ENCODE measurements at regions of chr17 and their contacts with region 1.

Region 1: DNA sequence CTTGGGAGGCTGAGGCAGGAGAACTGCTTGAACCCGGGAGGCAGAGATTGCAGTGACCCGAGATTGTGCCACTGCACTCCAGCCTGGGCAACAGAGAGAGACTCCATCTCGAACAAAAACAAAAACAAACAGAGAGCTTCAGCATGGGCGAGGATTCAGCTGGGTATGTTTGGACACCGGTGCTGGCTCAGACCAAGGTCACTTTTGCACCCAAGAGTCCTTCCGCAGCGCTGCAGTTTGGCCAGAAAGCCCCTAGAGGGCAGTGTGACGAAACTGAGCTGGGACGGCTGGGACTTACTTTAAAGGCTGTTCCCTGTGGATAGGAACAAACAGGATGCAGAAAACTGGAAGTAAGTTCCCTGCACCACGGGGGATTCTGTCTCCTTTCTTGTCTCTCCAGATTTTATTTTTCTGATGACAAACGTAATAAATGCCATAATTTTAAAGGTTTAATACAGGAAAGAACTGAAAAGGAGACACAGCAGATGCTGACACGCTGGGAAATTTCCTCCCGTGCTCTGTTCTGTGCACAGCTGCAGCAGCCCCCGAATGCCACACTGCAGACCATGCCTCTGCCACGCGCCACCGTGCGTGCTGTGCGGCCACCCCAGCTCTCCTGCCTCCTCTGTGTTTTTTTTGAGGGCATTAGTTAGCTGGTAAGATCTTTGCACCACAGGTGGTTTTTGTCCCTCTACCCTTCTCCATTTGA is 25.2 kb upstream of the USP36 start:
- DNase-seq: peak; percentile 76
- ATAC-seq: peak; percentile 72
- H3K4me3 ChIP-seq: no peak overlapping the region
- H3K4me3 Mint-ChIP-seq: no peak overlapping the region
- H3K27ac ChIP-seq: no peak overlapping the region
- H3K27ac Mint-ChIP-seq: no peak overlapping the region
- H3K4me1 ChIP-seq: no peaks in the 10 kb centered on the region
- H3K4me1 Mint-ChIP-seq: no peaks in the 10 kb centered on the region
- H3K27me3 ChIP-seq: no peaks in the 10 kb centered on the region
- H3K27me3 Mint-ChIP-seq: peaks cover 7% of the 10 kb centered on the region
- CTCF ChIP-seq: peak; percentile 92

Region 2: DNA sequence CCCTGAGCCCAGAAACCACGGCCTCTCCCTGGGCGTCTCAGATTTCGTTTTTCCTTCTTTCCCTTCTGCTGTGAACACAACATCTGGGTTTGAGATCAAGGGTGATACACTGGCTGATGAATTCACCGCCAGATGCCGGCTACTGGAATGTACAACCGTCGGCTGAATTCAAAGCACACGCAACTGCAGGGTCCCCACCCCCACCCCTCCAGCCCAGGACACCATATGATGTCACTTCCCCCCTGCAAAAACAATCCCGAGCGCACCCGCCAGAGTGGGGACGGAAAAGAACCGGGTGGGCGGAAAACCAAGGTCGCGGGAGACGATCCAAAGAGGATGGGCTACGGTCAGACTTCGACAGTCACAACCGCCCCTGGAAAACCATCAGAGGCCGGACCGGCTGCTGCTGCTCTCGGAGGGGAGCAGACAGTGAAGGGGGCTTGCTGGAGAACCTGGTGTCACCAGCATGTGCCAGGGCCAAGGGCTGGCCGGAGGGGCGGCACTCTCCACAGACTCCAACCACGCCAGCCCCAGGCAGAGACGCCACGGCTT is 13.9 kb after region 1 on chr17:
- CTCF ChIA-PET with region 1: interaction called, 14 read pairs
- POLR2A ChIA-PET with region 1: no interaction called
- intact Hi-C with region 1: no loop called
- DNase-seq: peak; percentile 62
- ATAC-seq: peak; percentile 28
- H3K4me3 ChIP-seq: peak overlapping the region in 4 of 5 experiments; percentile 25 to 50 (median 46)
- H3K4me3 Mint-ChIP-seq: peak overlapping the region; percentile 79
- H3K27ac ChIP-seq: peak overlapping the region; percentile 23 to 62
- H3K27ac Mint-ChIP-seq: peak overlapping the region; percentile 67
- H3K4me1 ChIP-seq: peaks cover 28 to 37% of the 10 kb centered on the region in 2 donors
- H3K4me1 Mint-ChIP-seq: peaks cover 34% of the 10 kb centered on the region
- H3K27me3 ChIP-seq: peaks cover 0 to 8% (median 0%) of the 10 kb centered on the region in 4 experiments
- H3K27me3 Mint-ChIP-seq: peaks cover 21% of the 10 kb centered on the region
- CTCF ChIP-seq: no peak

Region 3: GRCh38 chr17:78890498-78890897 is 24.7 kb after region 1 on chr17:
- CTCF ChIA-PET with region 1: interaction called, 42 read pairs
- POLR2A ChIA-PET with region 1: interaction called, 3 read pairs
- intact Hi-C with region 1: no loop called
- DNase-seq: peak; percentile 82
- ATAC-seq: peak; percentile 64
- H3K4me3 ChIP-seq: peak overlapping the region in 3 of 5 experiments; percentile 5 to 71 (median 56)
- H3K4me3 Mint-ChIP-seq: peak overlapping the region; percentile 72
- H3K27ac ChIP-seq: peak overlapping the region; percentile 93 to 96
- H3K27ac Mint-ChIP-seq: peak overlapping the region; percentile 93
- H3K4me1 ChIP-seq: peaks cover 41 to 53% of the 10 kb centered on the region in 2 donors
- H3K4me1 Mint-ChIP-seq: peaks cover 58% of the 10 kb centered on the region
- H3K27me3 ChIP-seq: no peaks in the 10 kb centered on the region
- H3K27me3 Mint-ChIP-seq: no peaks in the 10 kb centered on the region
- CTCF ChIP-seq: no peak

Region 4: DNA sequence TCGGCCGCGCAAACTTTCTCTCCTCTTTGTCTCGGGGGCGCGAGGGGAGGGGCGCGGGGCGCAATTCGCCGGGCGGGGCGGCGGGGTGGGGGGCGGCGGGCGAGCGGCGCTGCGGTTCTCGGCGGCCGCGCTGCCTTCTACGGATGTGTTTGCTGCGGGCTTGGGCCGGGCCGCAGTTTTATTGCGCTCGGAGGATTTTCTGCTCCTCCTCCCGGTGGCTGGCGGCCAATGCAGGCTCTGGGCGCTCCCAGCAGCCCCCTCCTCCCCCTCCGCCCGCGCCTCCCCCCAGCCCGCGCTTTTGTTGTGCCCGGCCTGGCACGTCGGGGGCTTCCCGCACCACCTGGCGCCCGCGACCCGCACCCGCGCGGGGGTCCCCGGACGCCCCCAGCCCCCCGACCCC is 59.4 kb after region 1 on chr17 and contains the start of gene TIMP2:
- CTCF ChIA-PET with region 1: interaction called, 9 read pairs
- POLR2A ChIA-PET with region 1: no interaction called
- intact Hi-C with region 1: loop called (anchors 1 kb)
- DNase-seq: peak; percentile 86
- ATAC-seq: peak; percentile 78
- H3K4me3 ChIP-seq: peak within 1 kb of the TSS; percentile 60 to 70 (median 66)
- H3K4me3 Mint-ChIP-seq: peak within 1 kb of the TSS; percentile 88
- H3K27ac ChIP-seq: no peak within 1 kb of the TSS
- H3K27ac Mint-ChIP-seq: peak within 1 kb of the TSS; percentile 15
- H3K4me1 ChIP-seq: peaks cover 15 to 27% of the 10 kb centered on the region in 2 donors
- H3K4me1 Mint-ChIP-seq: peaks cover 13% of the 10 kb centered on the region
- H3K27me3 ChIP-seq: peaks cover 0 to 8% (median 2%) of the 10 kb centered on the region in 4 experiments
- H3K27me3 Mint-ChIP-seq: peaks cover 11% of the 10 kb centered on the region
- CTCF ChIP-seq: peak; percentile 66
- total RNA-seq, gene TIMP2: 10.0 and 11.4 TPM in 2 replicates

Region 5: DNA sequence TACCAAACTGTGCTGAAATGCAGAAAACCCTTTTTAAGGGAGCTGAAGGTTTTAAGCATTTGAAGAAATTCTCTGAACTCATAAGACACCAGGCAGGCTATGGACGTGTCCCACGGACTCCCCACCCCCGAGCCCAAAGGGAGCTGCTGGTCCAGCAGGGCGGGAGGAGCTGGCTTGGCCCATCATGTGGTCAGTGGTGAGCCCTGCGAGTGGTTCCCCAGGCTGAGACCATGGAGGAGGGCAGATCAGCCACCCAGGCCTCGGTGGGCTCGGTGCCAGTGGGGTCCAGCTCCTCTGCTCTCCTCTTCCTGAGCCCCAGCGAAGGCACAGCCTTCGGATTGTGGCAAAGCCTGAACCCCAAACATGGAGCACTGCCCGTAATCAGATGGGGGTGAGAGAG is 86.9 kb after region 1 on chr17:
- CTCF ChIA-PET with region 1: no interaction called
- POLR2A ChIA-PET with region 1: no interaction called
- intact Hi-C with region 1: no loop called
- DNase-seq: no peak
- ATAC-seq: no peak
- H3K4me3 ChIP-seq: no peak overlapping the region
- H3K4me3 Mint-ChIP-seq: no peak overlapping the region
- H3K27ac ChIP-seq: no peak overlapping the region
- H3K27ac Mint-ChIP-seq: no peak overlapping the region
- H3K4me1 ChIP-seq: no peaks in the 10 kb centered on the region
- H3K4me1 Mint-ChIP-seq: no peaks in the 10 kb centered on the region
- H3K27me3 ChIP-seq: peaks cover 0 to 13% (median 0%) of the 10 kb centered on the region in 4 experiments
- H3K27me3 Mint-ChIP-seq: peaks cover 10% of the 10 kb centered on the region
- CTCF ChIP-seq: no peak

Region 6: GRCh38 chr17:78965491-78965948 is 99.7 kb after region 1 on chr17:
- CTCF ChIA-PET with region 1: interaction called, 119 read pairs
- POLR2A ChIA-PET with region 1: no interaction called
- intact Hi-C with region 1: no loop called
- DNase-seq: no peak
- ATAC-seq: no peak
- H3K4me3 ChIP-seq: no peak overlapping the region
- H3K4me3 Mint-ChIP-seq: peak overlapping the region; percentile 44
- H3K27ac ChIP-seq: no peak overlapping the region
- H3K27ac Mint-ChIP-seq: no peak overlapping the region
- H3K4me1 ChIP-seq: peaks cover 10 to 15% of the 10 kb centered on the region in 2 donors
- H3K4me1 Mint-ChIP-seq: peaks cover 22% of the 10 kb centered on the region
- H3K27me3 ChIP-seq: no peaks in the 10 kb centered on the region
- H3K27me3 Mint-ChIP-seq: peaks cover 3% of the 10 kb centered on the region
- CTCF ChIP-seq: no peak